MCF 10A (cell line): ENCODE measurements at regions of chr20 and their contacts with region 1.

Region 1: GRCh38 chr20:40683221-40683893 is 5.7 kb downstream of the MAFB start:
- DNase-seq: no peak
- H3K4me3 Mint-ChIP-seq: no peak overlapping the region
- H3K27ac Mint-ChIP-seq: no peak overlapping the region
- H3K4me1 Mint-ChIP-seq: peaks cover 17% of the 10 kb centered on the region
- H3K27me3 Mint-ChIP-seq: no peaks in the 10 kb centered on the region
- CTCF ChIP-seq: no peak

Region 2: GRCh38 chr20:40668449-40669228 is 14.7 kb before region 1 on chr20:
- CTCF ChIA-PET with region 1: interaction called, 6 read pairs
- POLR2A ChIA-PET with region 1: interaction called, 15 read pairs
- intact Hi-C with region 1: no loop called
- DNase-seq: peak; percentile 64
- H3K4me3 Mint-ChIP-seq: no peak overlapping the region
- H3K27ac Mint-ChIP-seq: no peak overlapping the region
- H3K4me1 Mint-ChIP-seq: peaks cover 5% of the 10 kb centered on the region
- H3K27me3 Mint-ChIP-seq: no peaks in the 10 kb centered on the region
- CTCF ChIP-seq: no peak

Region 3: GRCh38 chr20:40770564-40771307 is 87.4 kb after region 1 on chr20:
- CTCF ChIA-PET with region 1: no interaction called
- POLR2A ChIA-PET with region 1: no interaction called
- intact Hi-C with region 1: no loop called
- DNase-seq: no peak
- H3K4me3 Mint-ChIP-seq: no peak overlapping the region
- H3K27ac Mint-ChIP-seq: no peak overlapping the region
- H3K4me1 Mint-ChIP-seq: no peaks in the 10 kb centered on the region
- H3K27me3 Mint-ChIP-seq: no peaks in the 10 kb centered on the region
- CTCF ChIP-seq: no peak